CD4-positive, alpha-beta T cell (primary cell): ENCODE measurements at regions of chr14 and their contacts with region 1.

Region 1: GRCh38 chr14:76956316-76957090 is 72.0 kb downstream of the IRF2BPL start:
- DNase-seq: peak; percentile 65 to 97 (median 82)
- ATAC-seq: peak; percentile 60
- H3K4me3 ChIP-seq: peak overlapping the region; percentile 52
- H3K4me3 Mint-ChIP-seq: peak overlapping the region; percentile 82
- H3K27ac ChIP-seq: peak overlapping the region; percentile 95
- H3K27ac Mint-ChIP-seq: peak overlapping the region; percentile 92
- H3K4me1 ChIP-seq: peaks cover 71% of the 10 kb centered on the region
- H3K4me1 Mint-ChIP-seq: peaks cover 69% of the 10 kb centered on the region
- H3K27me3 ChIP-seq: no peaks in the 10 kb centered on the region
- H3K27me3 Mint-ChIP-seq: no peaks in the 10 kb centered on the region
- CTCF ChIP-seq: no peak

Region 2: GRCh38 chr14:76918751-76919543 is 37.6 kb before region 1 on chr14:
- CTCF ChIA-PET with region 1: interaction called, 20 read pairs
- POLR2A ChIA-PET with region 1: interaction called, 18 read pairs
- intact Hi-C with region 1: loop called in 1 of 2 experiments (anchors 2 kb)
- DNase-seq: peak in 2 of 14 experiments; percentile 46 to 49
- ATAC-seq: no peak
- H3K4me3 ChIP-seq: no peak overlapping the region
- H3K4me3 Mint-ChIP-seq: no peak overlapping the region
- H3K27ac ChIP-seq: no peak overlapping the region
- H3K27ac Mint-ChIP-seq: no peak overlapping the region
- H3K4me1 ChIP-seq: peaks cover 51% of the 10 kb centered on the region
- H3K4me1 Mint-ChIP-seq: peaks cover 60% of the 10 kb centered on the region
- H3K27me3 ChIP-seq: no peaks in the 10 kb centered on the region
- H3K27me3 Mint-ChIP-seq: no peaks in the 10 kb centered on the region
- CTCF ChIP-seq: no peak

Region 3: GRCh38 chr14:76924371-76925096 is 32.0 kb before region 1 on chr14:
- CTCF ChIA-PET with region 1: interaction called, 3 read pairs
- POLR2A ChIA-PET with region 1: interaction called, 40 read pairs
- intact Hi-C with region 1: loop called in 1 of 2 experiments (anchors 2 kb)
- DNase-seq: peak in 10 of 14 experiments; percentile 20 to 86 (median 52)
- ATAC-seq: peak; percentile 33
- H3K4me3 ChIP-seq: no peak overlapping the region
- H3K4me3 Mint-ChIP-seq: peak overlapping the region; percentile 35
- H3K27ac ChIP-seq: no peak overlapping the region
- H3K27ac Mint-ChIP-seq: peak overlapping the region; percentile 86
- H3K4me1 ChIP-seq: peaks cover 82% of the 10 kb centered on the region
- H3K4me1 Mint-ChIP-seq: peaks cover 89% of the 10 kb centered on the region
- H3K27me3 ChIP-seq: no peaks in the 10 kb centered on the region
- H3K27me3 Mint-ChIP-seq: no peaks in the 10 kb centered on the region
- CTCF ChIP-seq: no peak

Region 4: GRCh38 chr14:76929927-76930326 is 26.6 kb before region 1 on chr14:
- CTCF ChIA-PET with region 1: interaction called, 4 read pairs
- POLR2A ChIA-PET with region 1: interaction called, 40 read pairs
- intact Hi-C with region 1: loop called (anchors 1 to 2 kb)
- DNase-seq: peak; percentile 40 to 92 (median 60)
- ATAC-seq: peak; percentile 84
- H3K4me3 ChIP-seq: peak overlapping the region; percentile 20
- H3K4me3 Mint-ChIP-seq: peak overlapping the region; percentile 68
- H3K27ac ChIP-seq: peak overlapping the region; percentile 43 to 52
- H3K27ac Mint-ChIP-seq: peak overlapping the region; percentile 86
- H3K4me1 ChIP-seq: peaks cover 78% of the 10 kb centered on the region
- H3K4me1 Mint-ChIP-seq: peaks cover 75% of the 10 kb centered on the region
- H3K27me3 ChIP-seq: no peaks in the 10 kb centered on the region
- H3K27me3 Mint-ChIP-seq: no peaks in the 10 kb centered on the region
- CTCF ChIP-seq: no peak

Region 5: DNA sequence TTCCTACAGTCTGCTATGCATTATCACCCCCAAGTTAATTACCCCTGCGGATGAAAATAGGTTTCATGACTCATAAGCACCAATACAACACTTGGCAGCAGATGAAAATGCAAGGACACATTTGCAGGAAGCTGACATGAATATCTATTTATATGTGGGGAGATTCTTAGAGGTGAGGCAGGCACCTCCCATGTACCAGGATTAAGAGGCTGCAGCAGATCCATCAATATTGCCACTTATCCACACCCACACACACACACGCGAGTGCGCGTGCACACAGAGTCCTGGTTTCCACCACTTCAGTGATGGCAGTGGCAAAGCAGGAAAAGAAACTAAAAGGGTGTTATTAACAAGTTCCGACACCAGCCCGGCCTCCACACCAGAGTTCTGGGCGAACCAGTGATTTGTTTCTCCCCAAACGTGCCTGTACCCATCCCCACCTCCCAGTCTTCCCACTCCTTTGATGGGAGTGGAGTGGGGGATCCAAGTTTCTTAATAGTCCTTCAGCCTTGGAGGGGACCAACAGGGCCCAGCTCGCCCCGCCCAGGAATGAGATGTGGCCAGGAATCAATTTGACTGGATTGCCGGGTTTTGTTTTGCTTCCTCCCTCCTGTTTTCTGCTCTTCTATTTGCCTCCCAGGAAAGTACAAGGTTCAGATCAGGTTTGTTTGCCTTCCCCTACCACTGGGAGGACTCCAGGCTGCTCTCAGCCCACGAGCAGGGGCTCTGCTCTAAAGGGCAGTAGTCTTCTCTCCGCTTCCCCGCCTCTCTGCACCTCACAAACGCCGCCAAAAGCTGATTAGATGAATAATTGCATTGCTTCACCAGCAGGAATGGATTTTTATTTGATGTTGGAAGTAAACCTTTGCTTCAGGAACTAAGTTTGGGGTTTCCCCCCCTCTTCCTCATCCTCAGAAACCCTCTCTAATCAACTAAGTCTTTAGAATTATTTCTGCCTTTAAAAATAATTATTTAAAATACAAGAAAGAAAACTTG is 66.8 kb after region 1 on chr14:
- CTCF ChIA-PET with region 1: interaction called, 15 read pairs
- POLR2A ChIA-PET with region 1: interaction called, 81 read pairs
- intact Hi-C with region 1: loop called (anchors 1 to 2 kb)
- DNase-seq: peak in 1 of 14 experiments; percentile 33
- ATAC-seq: no peak
- H3K4me3 ChIP-seq: no peak overlapping the region
- H3K4me3 Mint-ChIP-seq: peak overlapping the region; percentile 69
- H3K27ac ChIP-seq: no peak overlapping the region
- H3K27ac Mint-ChIP-seq: peak overlapping the region; percentile 90
- H3K4me1 ChIP-seq: peaks cover 54% of the 10 kb centered on the region
- H3K4me1 Mint-ChIP-seq: peaks cover 36% of the 10 kb centered on the region
- H3K27me3 ChIP-seq: no peaks in the 10 kb centered on the region
- H3K27me3 Mint-ChIP-seq: no peaks in the 10 kb centered on the region
- CTCF ChIP-seq: no peak

Region 6: GRCh38 chr14:77040059-77040740 is 83.7 kb after region 1 on chr14:
- CTCF ChIA-PET with region 1: interaction called, 7 read pairs
- POLR2A ChIA-PET with region 1: interaction called, 69 read pairs
- intact Hi-C with region 1: loop called in 1 of 2 experiments (anchors 1 kb)
- DNase-seq: peak; percentile 96 to 100 (median 99)
- ATAC-seq: peak; percentile 79
- H3K4me3 ChIP-seq: peak overlapping the region; percentile 46
- H3K4me3 Mint-ChIP-seq: peak overlapping the region; percentile 84
- H3K27ac ChIP-seq: peak overlapping the region; percentile 93 to 96
- H3K27ac Mint-ChIP-seq: peak overlapping the region; percentile 100
- H3K4me1 ChIP-seq: peaks cover 86% of the 10 kb centered on the region
- H3K4me1 Mint-ChIP-seq: peaks cover 96% of the 10 kb centered on the region
- H3K27me3 ChIP-seq: no peaks in the 10 kb centered on the region
- H3K27me3 Mint-ChIP-seq: no peaks in the 10 kb centered on the region
- CTCF ChIP-seq: no peak

Region 7: GRCh38 chr14:77314043-77314442 is 357.5 kb after region 1 on chr14:
- CTCF ChIA-PET with region 1: no interaction called
- POLR2A ChIA-PET with region 1: no interaction called
- intact Hi-C with region 1: loop called in 1 of 2 experiments (anchors 10 kb)
- DNase-seq: no peak
- ATAC-seq: no peak
- H3K4me3 ChIP-seq: no peak overlapping the region
- H3K4me3 Mint-ChIP-seq: no peak overlapping the region
- H3K27ac ChIP-seq: no peak overlapping the region
- H3K27ac Mint-ChIP-seq: no peak overlapping the region
- H3K4me1 ChIP-seq: peaks cover 7% of the 10 kb centered on the region
- H3K4me1 Mint-ChIP-seq: peaks cover 5% of the 10 kb centered on the region
- H3K27me3 ChIP-seq: no peaks in the 10 kb centered on the region
- H3K27me3 Mint-ChIP-seq: no peaks in the 10 kb centered on the region
- CTCF ChIP-seq: no peak